IMR-90 (cell line): ENCODE measurements at regions of chr7 and their contacts with region 1.

Region 1: DNA sequence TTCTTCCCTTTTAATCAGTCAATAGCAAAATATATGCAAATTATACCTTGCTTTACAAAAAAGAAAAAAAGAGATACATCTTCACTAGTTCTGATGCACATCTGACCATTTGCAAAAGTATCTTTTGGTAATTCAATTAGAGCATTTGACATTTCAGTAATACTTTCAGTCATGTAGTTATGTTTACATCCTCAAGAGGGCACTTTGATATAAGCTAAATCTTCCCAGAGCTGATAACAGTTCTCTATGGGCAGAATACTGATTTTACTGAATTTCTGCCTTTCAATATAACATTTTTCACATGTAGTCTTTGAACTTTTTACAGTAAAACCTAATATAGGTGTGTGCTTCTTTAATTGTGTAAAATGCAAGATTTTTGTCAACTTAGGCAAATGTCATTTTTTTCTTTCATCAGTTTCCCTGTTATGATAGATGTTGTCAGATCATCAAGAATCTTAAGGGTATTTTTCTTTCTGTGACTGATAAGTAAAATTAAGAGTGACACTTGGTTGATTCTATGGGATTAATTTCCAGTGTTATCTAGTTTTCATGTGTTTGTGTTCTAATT is 703.5 kb upstream of the SEMA3D start:
- DNase-seq: peak; percentile 21
- ATAC-seq: peak; percentile 79
- H3K4me3 ChIP-seq: no peak overlapping the region
- H3K27ac ChIP-seq: no peak overlapping the region
- H3K4me1 ChIP-seq: no peaks in the 10 kb centered on the region
- H3K27me3 ChIP-seq: no peaks in the 10 kb centered on the region
- CTCF ChIP-seq: peak; percentile 55
- POLR2A ChIP-seq: no peak
- RAD21 ChIP-seq: peak; percentile 57

Region 2: DNA sequence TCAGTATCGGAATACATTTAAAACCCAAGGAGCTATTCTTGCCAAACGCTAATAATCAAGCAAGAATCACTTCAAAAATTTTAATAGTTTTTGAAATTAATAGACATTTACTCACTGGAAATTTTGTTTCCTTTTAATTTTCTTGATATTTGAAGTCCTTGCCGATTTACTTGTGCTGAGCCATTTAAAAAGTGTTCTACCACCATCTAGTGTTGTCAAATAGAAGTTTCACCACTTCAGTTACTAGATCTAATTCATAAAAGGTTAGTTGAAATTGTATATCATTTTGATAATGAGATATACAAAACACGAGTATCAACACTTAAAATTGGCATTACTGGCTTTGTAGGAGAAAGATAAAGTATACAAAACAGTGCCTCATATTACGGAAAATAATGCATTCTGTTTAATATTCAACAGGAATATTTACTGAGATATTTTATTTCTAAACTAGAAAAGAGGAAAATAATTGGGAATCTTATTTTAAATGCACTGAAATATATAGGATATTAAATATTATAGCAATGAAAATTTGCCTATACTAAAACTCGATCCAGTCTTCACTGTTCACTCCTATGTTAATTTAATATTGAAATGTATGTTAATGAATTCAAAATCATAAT is 38.6 kb before region 1 on chr7:
- CTCF ChIA-PET with region 1: no interaction called
- POLR2A ChIA-PET with region 1: no interaction called
- dilution Hi-C with region 1: no loop called
- in situ Hi-C with region 1: no loop called
- intact Hi-C with region 1: no loop called
- DNase-seq: peak; percentile 69
- ATAC-seq: 0 out of 2 replicates have a peak, but pooled peaks have one; percentile 35
- H3K4me3 ChIP-seq: no peak overlapping the region
- H3K27ac ChIP-seq: no peak overlapping the region
- H3K4me1 ChIP-seq: no peaks in the 10 kb centered on the region
- H3K27me3 ChIP-seq: no peaks in the 10 kb centered on the region
- CTCF ChIP-seq: peak; percentile 57
- POLR2A ChIP-seq: no peak
- RAD21 ChIP-seq: peak; percentile 61

Region 3: DNA sequence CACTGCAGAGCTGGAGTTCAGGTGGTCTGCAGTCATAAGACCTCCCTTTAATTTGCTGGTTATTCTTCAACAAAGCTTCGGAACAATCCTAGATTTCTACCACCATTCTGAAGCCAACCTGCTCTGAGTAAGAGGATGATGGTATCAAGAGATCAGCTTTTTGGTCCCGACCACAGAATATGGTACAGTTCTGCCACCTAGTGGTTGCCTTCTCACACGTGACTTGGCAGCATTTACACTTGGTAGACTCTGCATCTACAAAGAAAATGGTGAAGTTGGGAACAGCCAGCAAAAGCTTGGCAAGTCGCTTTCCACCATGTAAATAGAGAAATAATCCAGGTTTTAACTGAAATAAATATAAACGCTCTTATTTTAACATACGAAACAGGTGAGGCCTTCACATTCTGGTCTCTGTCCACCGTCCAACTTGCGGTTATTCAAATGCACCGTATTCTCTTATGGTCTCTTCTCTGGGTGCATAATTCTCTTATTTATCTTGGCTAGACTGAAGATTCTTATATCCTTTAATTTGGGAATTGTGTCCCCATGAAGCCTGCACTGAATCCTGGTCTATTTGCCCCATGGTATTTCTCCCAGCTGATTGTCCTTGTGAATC is 579.5 kb after region 1 on chr7:
- CTCF ChIA-PET with region 1: interaction called, 4 read pairs
- POLR2A ChIA-PET with region 1: no interaction called
- dilution Hi-C with region 1: no loop called
- in situ Hi-C with region 1: loop called (anchors 25 kb)
- intact Hi-C with region 1: loop called (anchors 1 kb)
- DNase-seq: peak; percentile 55
- ATAC-seq: no peak
- H3K4me3 ChIP-seq: no peak overlapping the region
- H3K27ac ChIP-seq: no peak overlapping the region
- H3K4me1 ChIP-seq: no peaks in the 10 kb centered on the region
- H3K27me3 ChIP-seq: no peaks in the 10 kb centered on the region
- CTCF ChIP-seq: peak; percentile 57
- POLR2A ChIP-seq: no peak
- RAD21 ChIP-seq: peak; percentile 66

Region 4: GRCh38 chr7:86904949-86905834 is 1014.9 kb after region 1 on chr7:
- CTCF ChIA-PET with region 1: interaction called, 3 read pairs
- POLR2A ChIA-PET with region 1: no interaction called
- dilution Hi-C with region 1: no loop called
- in situ Hi-C with region 1: loop called (anchors 10 kb)
- intact Hi-C with region 1: loop called (anchors 1 kb)
- DNase-seq: peak; percentile 10
- ATAC-seq: no peak; the same call in 1 of the 2 replicates
- H3K4me3 ChIP-seq: no peak overlapping the region
- H3K27ac ChIP-seq: no peak overlapping the region
- H3K4me1 ChIP-seq: no peaks in the 10 kb centered on the region
- H3K27me3 ChIP-seq: no peaks in the 10 kb centered on the region
- CTCF ChIP-seq: peak; percentile 56
- POLR2A ChIP-seq: no peak
- RAD21 ChIP-seq: peak; percentile 48